AG04449 (cell line): ENCODE measurements at regions of chr2 and their contacts with region 1.

Region 1: DNA sequence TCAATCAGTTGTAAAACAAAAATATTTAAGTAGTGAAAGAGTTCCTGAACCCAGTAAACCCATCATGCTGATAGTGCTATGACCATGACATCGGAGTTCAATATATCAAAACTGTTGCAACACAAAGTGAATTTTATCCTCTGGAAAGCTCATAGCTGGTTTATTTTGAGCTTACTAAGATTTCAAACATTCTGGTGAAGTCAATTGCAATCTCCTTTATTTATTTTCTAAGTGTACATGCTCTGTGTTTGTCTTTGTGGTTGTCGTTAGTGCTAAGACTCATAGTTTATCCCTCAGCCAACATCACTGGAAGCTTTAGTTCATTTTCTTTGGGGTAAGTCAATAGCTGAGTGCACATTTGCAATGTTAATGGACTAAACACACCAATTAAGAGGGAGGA is 91.9 kb downstream of the QPCT start:
- DNase-seq: no peak
- H3K4me3 ChIP-seq: no peak overlapping the region
- CTCF ChIP-seq: no peak

Region 2: GRCh38 chr2:37425408-37425807 is 10.9 kb before region 1 on chr2:
- CTCF ChIA-PET with region 1: interaction called, 11 read pairs
- POLR2A ChIA-PET with region 1: no interaction called
- DNase-seq: no peak
- H3K4me3 ChIP-seq: no peak overlapping the region
- CTCF ChIP-seq: no peak

Region 3: GRCh38 chr2:37472959-37473358 is 36.6 kb after region 1 on chr2:
- CTCF ChIA-PET with region 1: no interaction called
- POLR2A ChIA-PET with region 1: no interaction called
- DNase-seq: no peak
- H3K4me3 ChIP-seq: no peak overlapping the region
- CTCF ChIP-seq: no peak